Activated CD4-positive, alpha-beta T cell treated with anti-CD3 and anti-CD28 coated beads for 36 hours (primary cell): ENCODE measurements at regions of chr2 and their contacts with region 1.

Region 1: DNA sequence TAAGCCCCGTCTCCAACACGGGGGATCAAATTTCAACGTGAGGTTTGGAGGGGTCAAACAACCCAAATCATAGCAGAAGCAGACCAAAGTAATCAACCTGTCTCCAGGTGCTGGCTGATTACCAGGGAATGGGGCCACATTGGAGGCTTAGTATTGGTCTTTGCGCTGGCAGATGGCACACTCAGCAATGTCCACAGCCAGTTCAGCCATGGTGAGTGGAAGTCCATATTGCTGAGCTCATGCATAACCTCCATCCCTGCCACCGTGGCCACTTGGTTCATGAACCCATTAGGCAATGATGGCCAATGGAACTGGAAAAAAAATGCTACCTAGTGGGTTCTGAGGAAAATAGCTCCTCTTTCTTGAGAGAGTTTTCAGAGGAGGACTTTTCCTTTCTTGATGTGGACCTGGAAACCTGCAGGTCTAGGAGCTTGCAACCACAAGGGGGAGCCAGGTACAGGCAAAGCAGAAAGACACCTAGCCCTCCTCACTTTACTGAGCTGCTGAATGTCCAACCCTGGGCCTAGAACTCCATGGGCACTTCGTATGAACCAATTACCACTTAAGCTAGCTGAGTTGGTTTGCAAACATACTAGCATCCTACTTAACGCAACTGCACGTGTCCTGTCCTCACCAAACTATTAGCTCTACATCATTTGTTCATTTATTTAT is 128.0 kb upstream of the GYPC start:
- DNase-seq: peak; percentile 82
- ATAC-seq: peak; percentile 65
- H3K4me3 Mint-ChIP-seq: no peak overlapping the region
- H3K27ac Mint-ChIP-seq: no peak overlapping the region
- H3K4me1 Mint-ChIP-seq: no peaks in the 10 kb centered on the region
- H3K27me3 Mint-ChIP-seq: peaks cover 2% of the 10 kb centered on the region

Region 2: GRCh38 chr2:126208266-126208665 is 319.7 kb before region 1 on chr2:
- CTCF ChIA-PET with region 1: no interaction called
- POLR2A ChIA-PET with region 1: no interaction called
- intact Hi-C with region 1: no loop called
- DNase-seq: no peak
- ATAC-seq: no peak
- H3K4me3 Mint-ChIP-seq: no peak overlapping the region
- H3K27ac Mint-ChIP-seq: no peak overlapping the region
- H3K4me1 Mint-ChIP-seq: no peaks in the 10 kb centered on the region
- H3K27me3 Mint-ChIP-seq: peaks cover 7% of the 10 kb centered on the region

Region 3: DNA sequence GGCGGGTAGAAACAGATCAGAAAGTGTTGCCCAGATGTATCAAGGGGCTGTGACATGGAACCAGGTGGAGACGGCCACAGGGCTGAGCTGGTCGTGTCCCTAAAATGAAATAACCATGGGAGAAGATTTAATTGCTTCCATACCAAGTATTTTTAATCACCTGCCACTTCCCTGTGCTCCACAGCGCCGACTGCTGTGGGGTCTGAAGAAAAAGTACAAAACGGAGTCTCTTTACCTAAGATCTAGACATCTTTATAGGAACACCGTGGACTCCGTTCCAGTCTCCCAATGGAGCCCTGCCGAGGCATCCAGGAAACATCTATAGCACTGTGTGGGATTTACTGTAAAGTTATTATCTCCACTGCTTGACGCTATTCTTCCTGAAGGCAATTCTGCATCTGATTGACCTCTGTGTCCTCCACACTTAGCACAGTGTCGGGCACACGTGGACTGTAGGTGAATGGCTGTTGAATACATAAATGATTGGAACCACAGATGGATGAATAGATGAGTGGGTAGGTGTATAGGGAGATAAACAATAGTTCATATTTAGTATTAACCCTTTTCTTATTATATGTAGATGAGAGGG is 106.4 kb after region 1 on chr2:
- CTCF ChIA-PET with region 1: interaction called, 7 read pairs
- POLR2A ChIA-PET with region 1: no interaction called
- intact Hi-C with region 1: loop called (anchors 2 to 10 kb)
- DNase-seq: peak; percentile 53
- ATAC-seq: no peak
- H3K4me3 Mint-ChIP-seq: no peak overlapping the region
- H3K27ac Mint-ChIP-seq: no peak overlapping the region
- H3K4me1 Mint-ChIP-seq: peaks cover 2% of the 10 kb centered on the region
- H3K27me3 Mint-ChIP-seq: peaks cover 4% of the 10 kb centered on the region

Region 4: DNA sequence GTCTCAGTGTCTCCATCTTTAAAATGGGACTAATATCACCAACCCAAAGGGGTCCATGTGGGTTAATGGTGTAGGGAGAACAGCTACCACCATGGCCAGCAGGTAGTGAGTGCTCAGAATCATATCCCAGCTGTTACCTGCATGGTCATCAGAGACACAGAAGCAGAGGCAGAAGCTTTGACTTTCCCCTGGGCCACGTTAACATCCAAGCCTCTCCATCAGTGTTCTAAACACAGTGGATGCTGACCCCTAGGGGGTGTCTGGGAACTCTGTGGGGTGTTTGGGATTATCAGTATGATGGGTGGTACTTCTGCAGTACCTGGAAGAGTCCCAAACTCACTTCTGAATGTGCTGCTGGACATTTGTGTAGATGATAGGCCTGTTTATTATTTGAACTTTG is 221.6 kb after region 1 on chr2:
- CTCF ChIA-PET with region 1: interaction called, 4 read pairs
- POLR2A ChIA-PET with region 1: no interaction called
- intact Hi-C with region 1: loop called in 1 of 2 experiments (anchors 1 kb)
- DNase-seq: peak; percentile 28
- ATAC-seq: peak; percentile 57
- H3K4me3 Mint-ChIP-seq: no peak overlapping the region
- H3K27ac Mint-ChIP-seq: no peak overlapping the region
- H3K4me1 Mint-ChIP-seq: peaks cover 5% of the 10 kb centered on the region
- H3K27me3 Mint-ChIP-seq: no peaks in the 10 kb centered on the region

Region 5: GRCh38 chr2:126886211-126886915 is 358.4 kb after region 1 on chr2:
- CTCF ChIA-PET with region 1: interaction called, 4 read pairs
- POLR2A ChIA-PET with region 1: no interaction called
- intact Hi-C with region 1: loop called in 1 of 2 experiments (anchors 2 kb)
- DNase-seq: peak; percentile 83
- ATAC-seq: peak; percentile 96
- H3K4me3 Mint-ChIP-seq: no peak overlapping the region
- H3K27ac Mint-ChIP-seq: no peak overlapping the region
- H3K4me1 Mint-ChIP-seq: peaks cover 7% of the 10 kb centered on the region
- H3K27me3 Mint-ChIP-seq: peaks cover 12% of the 10 kb centered on the region